T-cell (primary cell): ENCODE measurements at regions of chr1 and their contacts with region 1.

Region 1: GRCh38 chr1:64745986-64746940 is 1.4 kb downstream of the RAVER2 start:
- DNase-seq: peak in 3 of 35 experiments; percentile 5 to 16 (median 13)
- ATAC-seq: peak in 1 of 4 experiments; percentile 7
- H3K4me3 ChIP-seq: peak overlapping the region in 1 of 2 donors; percentile 72
- H3K4me3 Mint-ChIP-seq: peak overlapping the region; percentile 82 to 88 (median 83)
- H3K27ac ChIP-seq: peak overlapping the region; percentile 54
- H3K27ac Mint-ChIP-seq: peak overlapping the region; percentile 82 to 89
- H3K4me1 ChIP-seq: peaks cover 5 to 13% of the 10 kb centered on the region in 2 experiments
- H3K4me1 Mint-ChIP-seq: peaks cover 19 to 23% (median 21%) of the 10 kb centered on the region in 3 donors
- H3K27me3 ChIP-seq: no peaks in the 10 kb centered on the region
- H3K27me3 Mint-ChIP-seq: no peaks in the 10 kb centered on the region

Region 2: DNA sequence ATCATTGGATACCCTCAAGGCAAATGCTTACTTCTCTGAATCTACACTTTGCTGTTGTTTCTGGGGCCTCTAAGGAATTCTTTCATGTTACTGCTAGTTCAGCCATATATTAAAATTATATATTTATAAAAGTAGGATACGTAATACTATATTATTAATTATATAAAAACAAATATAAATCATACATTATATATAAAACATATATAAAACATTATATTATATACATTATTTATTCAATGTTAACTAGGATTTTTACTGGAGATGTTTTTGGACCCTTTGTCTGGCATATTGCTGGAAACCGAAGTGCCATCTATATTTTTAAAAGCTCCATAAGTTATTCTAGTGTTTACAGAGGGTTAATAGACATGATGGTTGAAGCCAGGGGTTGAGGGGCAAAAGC is 1366.7 kb before region 1 on chr1:
- CTCF ChIA-PET with region 1: interaction called in 1 of 2 experiments, 10 read pairs
- POLR2A ChIA-PET with region 1: no interaction called
- DNase-seq: no peak
- ATAC-seq: no peak
- H3K4me3 ChIP-seq: no peak overlapping the region
- H3K4me3 Mint-ChIP-seq: no peak overlapping the region
- H3K27ac ChIP-seq: no peak overlapping the region
- H3K27ac Mint-ChIP-seq: no peak overlapping the region
- H3K4me1 ChIP-seq: peaks cover 0 to 3% of the 10 kb centered on the region in 2 experiments
- H3K4me1 Mint-ChIP-seq: peaks cover 24 to 47% (median 41%) of the 10 kb centered on the region in 3 donors
- H3K27me3 ChIP-seq: no peaks in the 10 kb centered on the region
- H3K27me3 Mint-ChIP-seq: no peaks in the 10 kb centered on the region

Region 3: GRCh38 chr1:64756770-64757169 is 10.5 kb after region 1 on chr1:
- CTCF ChIA-PET with region 1: no interaction called
- POLR2A ChIA-PET with region 1: no interaction called
- DNase-seq: no peak
- ATAC-seq: no peak
- H3K4me3 ChIP-seq: no peak overlapping the region
- H3K4me3 Mint-ChIP-seq: no peak overlapping the region
- H3K27ac ChIP-seq: no peak overlapping the region
- H3K27ac Mint-ChIP-seq: no peak overlapping the region
- H3K4me1 ChIP-seq: no peaks in the 10 kb centered on the region
- H3K4me1 Mint-ChIP-seq: no peaks in the 10 kb centered on the region
- H3K27me3 ChIP-seq: no peaks in the 10 kb centered on the region
- H3K27me3 Mint-ChIP-seq: no peaks in the 10 kb centered on the region